PC-3 (cell line): ENCODE measurements at regions of chr5 and their contacts with region 1.

Region 1: DNA sequence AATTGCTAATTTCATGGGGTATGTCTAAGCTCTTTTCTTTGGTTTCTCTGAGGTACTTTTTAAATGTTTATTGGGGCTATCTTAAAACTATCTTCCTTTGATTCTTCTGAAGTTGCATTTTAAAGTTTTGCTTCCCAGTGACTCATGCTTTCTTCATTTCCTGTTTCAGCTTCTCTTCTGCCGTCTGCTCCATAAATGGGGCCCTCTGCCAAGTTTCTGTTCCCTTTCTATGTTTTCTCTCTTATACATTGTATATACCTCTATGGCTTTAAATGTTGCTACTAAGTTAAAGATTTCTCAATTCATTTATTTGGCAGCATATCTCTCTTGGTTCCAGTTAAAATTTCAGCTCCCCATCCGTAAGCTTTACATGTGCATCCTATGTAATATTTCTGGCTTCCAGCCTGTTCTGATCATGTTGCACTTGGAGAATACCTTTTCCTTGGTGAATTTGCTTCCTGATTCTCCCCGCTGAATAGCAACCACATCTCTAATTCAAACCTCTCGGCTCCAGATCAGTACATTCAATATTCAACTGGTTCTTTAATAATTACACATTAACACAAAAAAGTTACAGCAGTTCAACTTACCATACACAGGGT is 125.3 kb downstream of the ST8SIA4 start:
- DNase-seq: peak; percentile 88
- ATAC-seq: peak; percentile 88
- H3K4me3 ChIP-seq: peak overlapping the region; percentile 19; the same call in 1 of the 2 replicates
- H3K27ac ChIP-seq: peak overlapping the region; percentile 87
- H3K4me1 ChIP-seq: peaks cover 29% of the 10 kb centered on the region
- H3K27me3 ChIP-seq: no peaks in the 10 kb centered on the region
- CTCF ChIP-seq: no peak

Region 2: GRCh38 chr5:100479079-100479688 is 298.6 kb before region 1 on chr5:
- CTCF ChIA-PET with region 1: no interaction called
- POLR2A ChIA-PET with region 1: no interaction called
- intact Hi-C with region 1: loop called (anchors 5 kb)
- DNase-seq: peak; percentile 68
- ATAC-seq: peak; percentile 89
- H3K4me3 ChIP-seq: no peak overlapping the region
- H3K27ac ChIP-seq: no peak overlapping the region
- H3K4me1 ChIP-seq: no peaks in the 10 kb centered on the region
- H3K27me3 ChIP-seq: no peaks in the 10 kb centered on the region
- CTCF ChIP-seq: peak; percentile 88

Region 3: DNA sequence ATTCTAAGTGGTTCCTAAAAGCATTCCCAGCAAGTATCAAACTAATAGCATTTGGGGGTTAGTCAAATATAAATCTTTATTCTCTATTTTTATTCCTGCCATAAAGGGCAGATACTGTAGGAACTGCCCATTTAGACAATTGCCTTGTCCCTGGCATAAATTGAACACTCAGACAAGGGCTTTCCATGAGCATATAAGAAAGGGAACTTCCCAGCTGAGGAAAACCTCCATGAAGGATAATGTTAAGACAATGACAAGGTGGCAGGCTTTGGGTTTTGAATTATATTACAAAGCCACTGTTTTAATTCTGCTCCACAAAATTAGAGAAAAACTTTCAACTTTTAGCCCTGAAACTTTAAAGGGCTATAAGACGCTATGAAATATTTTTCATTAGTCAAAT is 44.0 kb after region 1 on chr5:
- CTCF ChIA-PET with region 1: no interaction called
- POLR2A ChIA-PET with region 1: no interaction called
- intact Hi-C with region 1: loop called (anchors 1 kb)
- DNase-seq: no peak
- ATAC-seq: no peak
- H3K4me3 ChIP-seq: peak overlapping the region; percentile 59; the same call in 1 of the 2 replicates
- H3K27ac ChIP-seq: peak overlapping the region; percentile 94
- H3K4me1 ChIP-seq: peaks cover 25% of the 10 kb centered on the region
- H3K27me3 ChIP-seq: no peaks in the 10 kb centered on the region
- CTCF ChIP-seq: no peak

Region 4: DNA sequence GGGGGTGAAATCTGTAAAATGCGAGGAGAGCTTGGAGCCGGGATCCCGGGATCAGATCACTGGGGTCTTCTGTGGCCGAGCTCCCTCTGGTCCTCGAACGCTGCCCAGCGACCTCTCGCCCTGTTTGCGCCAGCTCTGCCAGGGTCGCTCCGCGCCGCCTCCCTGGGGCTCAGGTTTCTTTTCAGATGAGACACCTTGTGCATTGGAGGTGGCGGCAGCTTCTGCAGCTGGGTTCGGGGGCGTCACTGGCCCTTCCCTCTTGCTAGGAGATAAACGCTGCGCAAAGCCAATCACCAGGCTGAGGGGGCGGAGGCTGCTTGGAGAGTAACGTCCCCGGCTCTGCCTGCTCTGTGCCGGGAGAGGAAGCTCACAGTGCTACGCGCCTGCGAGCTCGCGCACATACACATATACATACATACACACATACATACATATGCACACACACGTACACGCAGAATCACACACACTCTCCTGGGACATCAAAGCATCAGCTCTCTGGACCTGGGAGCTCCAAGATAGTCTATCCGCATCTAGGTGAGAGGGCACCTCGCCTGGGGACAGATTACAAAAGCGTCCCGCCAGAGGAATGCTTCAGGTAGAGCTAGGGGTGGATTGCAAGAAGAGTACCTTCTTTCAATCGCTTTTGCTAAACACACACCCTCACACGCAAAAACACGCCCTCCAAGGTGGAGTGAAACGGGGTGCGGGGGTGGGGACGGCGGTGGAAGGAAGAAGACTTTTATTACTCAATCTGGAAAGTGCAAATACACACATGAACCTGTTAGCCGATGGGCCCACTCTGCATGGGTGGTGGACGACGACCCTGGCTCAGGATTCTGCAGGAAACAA is 125.5 kb after region 1 on chr5 and contains the start of gene ST8SIA4:
- CTCF ChIA-PET with region 1: interaction called, 4 read pairs
- POLR2A ChIA-PET with region 1: no interaction called
- intact Hi-C with region 1: loop called (anchors 1 kb)
- DNase-seq: peak; percentile 85
- ATAC-seq: peak; percentile 86
- H3K4me3 ChIP-seq: peak within 1 kb of the TSS; percentile 72
- H3K27ac ChIP-seq: no peak within 1 kb of the TSS
- H3K4me1 ChIP-seq: peaks cover 26% of the 10 kb centered on the region
- H3K27me3 ChIP-seq: peaks cover 19% of the 10 kb centered on the region; the same call in 1 of the 2 replicates
- CTCF ChIP-seq: no peak
- total RNA-seq, gene ST8SIA4: 0.63 and 0.91 TPM in 2 replicates

Region 5: DNA sequence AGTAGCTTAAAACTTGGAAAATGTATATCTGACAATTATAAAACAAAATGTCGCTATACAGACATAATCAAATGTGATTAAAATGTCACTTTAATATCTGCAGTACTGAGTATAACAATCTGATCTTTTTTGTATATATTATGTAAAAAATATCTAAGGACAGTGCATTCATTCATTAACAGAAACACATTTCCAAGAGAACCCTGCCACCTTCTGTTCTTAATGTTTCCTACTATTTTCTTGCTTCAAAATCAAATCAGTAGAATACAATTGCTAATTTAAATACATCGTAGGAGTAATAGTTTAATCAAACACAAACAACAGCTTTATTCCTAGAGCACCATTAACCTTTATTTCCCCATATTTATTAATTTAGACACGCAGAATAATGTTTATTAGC is 267.9 kb after region 1 on chr5:
- CTCF ChIA-PET with region 1: no interaction called
- POLR2A ChIA-PET with region 1: no interaction called
- intact Hi-C with region 1: loop called (anchors 1 kb)
- DNase-seq: peak; percentile 44
- ATAC-seq: peak; percentile 46
- H3K4me3 ChIP-seq: no peak overlapping the region
- H3K27ac ChIP-seq: no peak overlapping the region
- H3K4me1 ChIP-seq: no peaks in the 10 kb centered on the region
- H3K27me3 ChIP-seq: no peaks in the 10 kb centered on the region
- CTCF ChIP-seq: peak; percentile 54